ENCODE measurements at regions of chr3 and their contacts with region 1.

Region 1: DNA sequence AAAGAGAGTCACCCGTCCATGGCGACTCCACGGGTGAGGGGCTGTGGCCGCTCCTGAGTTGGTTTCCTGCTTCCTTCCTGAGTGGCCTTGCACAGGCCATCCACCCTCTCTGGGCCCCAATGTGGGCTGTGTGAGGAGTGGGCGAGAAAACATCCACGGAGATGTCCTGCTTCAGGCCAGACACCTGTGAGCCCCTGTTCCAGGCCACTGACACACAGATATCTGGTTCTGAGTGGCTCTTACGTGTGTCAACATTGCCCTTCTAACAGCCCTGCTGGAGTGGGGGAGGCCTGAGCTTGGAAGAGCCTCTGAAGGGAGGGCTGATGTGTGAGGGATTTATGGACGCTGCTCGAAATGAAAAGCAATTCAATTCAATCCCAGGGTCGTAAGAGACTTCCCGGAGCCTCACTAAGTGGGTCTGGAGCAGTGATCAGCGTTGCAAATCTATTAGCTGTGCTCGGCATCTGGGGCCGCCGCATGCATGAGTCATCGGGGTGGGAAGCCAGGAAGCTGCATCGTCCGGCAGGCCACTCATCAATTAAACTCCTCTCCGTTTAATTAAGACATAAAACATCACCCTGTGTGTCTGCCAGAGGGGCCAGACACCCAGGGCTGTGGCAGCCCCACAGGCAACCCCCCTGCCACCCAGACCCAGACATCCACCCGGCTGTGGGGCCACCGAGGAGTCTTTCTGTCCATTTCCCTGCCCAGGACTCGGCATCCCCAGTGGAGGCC is 20.0 kb upstream of the PRR23E start:
- DNase-seq: no peak
- ATAC-seq: no peak

Region 2: GRCh38 chr3:126995926-126996512 is 176.9 kb before region 1 on chr3:
- intact Hi-C with region 1: loop called (anchors 10 kb)
- DNase-seq: no peak
- ATAC-seq: no peak

Measured in Right ventricle myocardium superior (tissue), 1 donor.